ENCODE measurements at regions of chr20 and their contacts with region 1.

Region 1: DNA sequence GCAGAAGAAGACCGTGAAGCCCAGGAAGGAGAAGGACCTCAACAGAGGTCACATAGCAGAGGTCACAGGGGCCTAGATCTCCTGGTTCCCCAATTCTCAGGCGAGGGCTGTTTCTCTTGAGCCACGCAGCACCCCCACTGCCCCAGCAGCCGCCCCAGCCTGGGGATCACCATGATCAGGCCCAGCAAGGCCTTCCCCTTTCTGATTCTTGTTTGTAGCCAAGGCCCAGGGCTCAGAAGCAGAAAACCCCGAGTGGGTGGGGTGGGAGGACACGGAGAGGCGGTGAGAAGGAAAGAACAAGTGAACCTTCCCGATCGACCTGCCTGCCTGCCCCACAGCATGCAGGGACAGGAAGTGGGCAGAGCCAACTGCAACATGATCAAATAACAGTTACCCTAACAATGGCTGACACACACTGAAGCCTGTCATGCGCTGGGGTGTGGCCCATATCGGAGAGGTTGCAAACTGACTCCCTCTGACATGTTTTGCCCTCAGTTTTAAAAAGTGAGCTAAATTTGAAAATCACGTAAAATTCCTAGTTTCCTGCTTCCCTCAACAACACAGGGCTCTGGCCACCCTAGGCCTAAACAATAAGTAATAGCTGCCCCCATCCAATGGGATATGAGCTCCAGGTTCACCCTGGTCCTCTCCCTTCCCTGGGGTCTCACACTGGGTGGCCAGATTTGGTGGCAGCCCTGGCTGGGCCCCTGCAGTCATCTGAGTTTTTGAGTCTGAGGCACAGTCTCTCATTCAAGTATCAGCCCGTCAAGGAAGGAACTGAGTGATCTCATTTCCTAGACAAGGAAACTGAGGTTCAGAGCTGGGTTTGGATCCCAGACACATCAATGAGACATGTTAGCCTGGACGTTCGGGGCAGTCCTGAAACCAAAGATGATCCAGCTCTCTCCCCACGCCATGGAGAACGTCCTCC is 6.5 kb downstream of the PEDS1 start:
- DNase-seq: peak; percentile 45
- ATAC-seq: peak; percentile 96
- H3K4me3 ChIP-seq: peak overlapping the region; percentile 62; the same call in 1 of the 2 replicates
- H3K27ac ChIP-seq: peak overlapping the region; percentile 93
- H3K4me1 ChIP-seq: peaks cover 15% of the 10 kb centered on the region
- H3K27me3 ChIP-seq: no peaks in the 10 kb centered on the region
- CTCF ChIP-seq: no peak
- EP300 ChIP-seq: peak; percentile 8 to 23; a peak in 1 of 4 replicates
- POLR2A ChIP-seq: peak; percentile 80
- RAD21 ChIP-seq: no peak

Region 2: DNA sequence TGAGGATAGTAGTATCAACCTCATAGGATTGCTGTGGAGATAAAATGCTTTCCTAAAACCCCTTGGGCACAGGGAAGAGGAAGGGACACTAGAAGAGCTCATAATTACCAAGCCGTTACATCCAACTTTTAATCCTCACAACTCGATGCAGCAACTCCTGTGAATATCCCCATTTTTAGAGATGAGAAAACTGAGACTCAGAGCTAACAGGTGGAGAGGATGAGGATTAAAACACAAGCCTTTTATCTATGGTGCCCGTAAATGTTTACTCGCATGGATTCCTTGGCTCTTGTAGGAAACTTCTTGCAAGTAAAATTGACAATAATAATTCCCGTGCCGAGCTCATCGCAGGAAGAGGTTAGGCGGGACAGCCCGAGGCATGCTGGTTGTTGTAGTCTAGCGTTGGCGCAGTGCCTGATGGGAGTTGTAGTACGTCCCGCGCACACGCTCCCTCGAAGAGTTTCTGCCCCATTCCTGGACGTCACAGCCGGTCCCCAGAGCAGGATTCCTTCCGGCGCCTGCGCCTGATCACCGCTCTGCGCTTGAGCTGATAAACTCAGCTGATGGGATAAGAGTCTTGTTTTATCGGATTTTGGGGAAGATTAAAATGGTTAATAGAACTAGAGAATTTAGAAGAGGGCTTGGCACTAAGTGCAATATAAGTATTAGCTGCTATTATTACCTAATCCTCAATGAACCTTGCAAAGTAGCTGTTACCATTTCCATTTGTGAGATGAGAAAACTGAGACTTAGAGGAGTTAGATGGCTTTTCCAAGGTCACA is 31.2 kb before region 1 on chr20:
- CTCF ChIA-PET with region 1: interaction called, 49 read pairs
- POLR2A ChIA-PET with region 1: interaction called, 34 read pairs
- RAD21 ChIA-PET with region 1: interaction called, 13 read pairs
- SMC1A ChIA-PET with region 1: interaction called, 28 read pairs
- in situ Hi-C with region 1: no loop called
- intact Hi-C with region 1: loop called (anchors 5 kb)
- DNase-seq: peak; percentile 89
- ATAC-seq: peak; percentile 80
- H3K4me3 ChIP-seq: peak overlapping the region; percentile 96
- H3K27ac ChIP-seq: peak overlapping the region; percentile 65
- H3K4me1 ChIP-seq: peaks cover 22% of the 10 kb centered on the region
- H3K27me3 ChIP-seq: no peaks in the 10 kb centered on the region
- CTCF ChIP-seq: no peak
- EP300 ChIP-seq: no peak
- POLR2A ChIP-seq: peak; percentile 77
- RAD21 ChIP-seq: no peak